ENCODE measurements at regions of chr5 and their contacts with region 1.

Region 1: GRCh38 chr5:149960272-149961185 is at the start of gene SLC26A2:
- DNase-seq: peak; percentile 100
- H3K4me3 ChIP-seq: peak within 1 kb of the TSS; percentile 73
- H3K27ac ChIP-seq: peak within 1 kb of the TSS; percentile 96
- H3K4me1 ChIP-seq: peaks cover 4% of the 10 kb centered on the region
- H3K27me3 ChIP-seq: no peaks in the 10 kb centered on the region
- total RNA-seq, gene SLC26A2: 11.1 and 11.4 TPM in 2 replicates

Region 2: GRCh38 chr5:149636851-149637246 is 323.7 kb before region 1 on chr5:
- in situ Hi-C with region 1: loop called (anchors 10 kb)
- DNase-seq: peak; percentile 90
- H3K4me3 ChIP-seq: no peak overlapping the region
- H3K27ac ChIP-seq: no peak overlapping the region
- H3K4me1 ChIP-seq: peaks cover 10% of the 10 kb centered on the region
- H3K27me3 ChIP-seq: no peaks in the 10 kb centered on the region

Region 3: DNA sequence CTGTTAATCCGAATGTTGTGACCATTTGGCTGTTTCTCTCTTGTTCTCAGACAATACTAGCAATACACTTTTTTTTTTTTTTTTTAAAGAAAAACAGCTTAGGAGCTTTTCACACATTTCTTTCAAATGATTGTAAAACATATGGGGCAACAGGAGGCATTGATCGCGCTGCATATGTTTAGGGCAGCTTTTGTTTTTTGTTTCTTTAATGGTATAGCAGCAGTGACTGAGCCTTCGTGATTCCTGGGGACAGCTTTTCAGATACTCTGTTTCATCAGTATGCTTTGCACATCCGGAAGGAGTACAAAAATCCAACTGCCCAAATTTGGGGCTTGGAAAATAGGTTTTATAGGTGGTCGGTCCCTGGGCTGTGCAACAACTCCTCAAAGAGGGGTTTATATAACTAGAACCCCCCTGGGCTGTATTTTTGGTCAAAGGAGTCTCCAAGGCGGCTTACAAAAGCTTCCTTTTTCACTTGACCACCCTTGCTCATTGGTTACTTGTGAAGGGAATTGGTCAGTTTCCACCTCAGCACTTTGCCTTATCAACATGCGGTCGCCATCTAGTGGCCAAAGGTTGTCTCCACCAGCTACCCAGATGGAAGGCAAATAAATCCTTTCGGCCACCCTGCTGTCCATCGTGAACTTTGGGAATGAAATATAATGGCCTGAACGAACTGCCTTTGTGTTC is 107.7 kb before region 1 on chr5:
- in situ Hi-C with region 1: loop called (anchors 10 kb)
- DNase-seq: peak; percentile 83
- H3K4me3 ChIP-seq: no peak overlapping the region
- H3K27ac ChIP-seq: no peak overlapping the region
- H3K4me1 ChIP-seq: no peaks in the 10 kb centered on the region
- H3K27me3 ChIP-seq: no peaks in the 10 kb centered on the region

Measured in GM23248 (cell line).